Activated CD4-positive, alpha-beta T cell treated with anti-CD3 and anti-CD28 coated beads, Interleukin-2, amount 10 ng/mL, durations not matched to agents 7 days and 5 days (primary cell): ENCODE measurements at regions of chr9 and their contacts with region 1.

Region 1: DNA sequence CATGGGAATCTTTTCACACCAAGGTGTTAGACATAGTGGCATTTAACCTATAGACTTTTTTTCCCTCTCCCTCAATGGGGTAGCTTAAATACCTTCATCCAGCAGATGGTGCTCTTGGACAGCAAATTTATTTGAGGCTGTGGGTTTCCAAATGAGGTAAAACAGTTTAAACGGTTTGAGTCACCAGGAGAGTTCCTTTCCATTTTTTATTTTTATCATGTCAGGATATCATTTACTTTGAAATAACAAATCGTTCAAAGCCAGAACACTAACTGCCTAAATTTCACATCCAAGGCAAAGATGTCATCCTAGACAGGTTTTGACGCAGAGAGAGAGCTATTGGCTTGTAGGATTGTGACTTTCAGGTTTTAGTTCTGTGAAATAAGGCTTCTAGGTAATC is 69.7 kb downstream of the KDM4C start:
- DNase-seq: peak; percentile 59
- H3K4me3 Mint-ChIP-seq: no peak overlapping the region
- H3K27ac Mint-ChIP-seq: no peak overlapping the region
- H3K4me1 Mint-ChIP-seq: peaks cover 2% of the 10 kb centered on the region
- H3K27me3 Mint-ChIP-seq: no peaks in the 10 kb centered on the region

Region 2: GRCh38 chr9:6805532-6805931 is 21.9 kb before region 1 on chr9:
- CTCF ChIA-PET with region 1: no interaction called
- POLR2A ChIA-PET with region 1: no interaction called
- DNase-seq: no peak
- H3K4me3 Mint-ChIP-seq: no peak overlapping the region
- H3K27ac Mint-ChIP-seq: no peak overlapping the region
- H3K4me1 Mint-ChIP-seq: no peaks in the 10 kb centered on the region
- H3K27me3 Mint-ChIP-seq: no peaks in the 10 kb centered on the region

Region 3: GRCh38 chr9:6816581-6816980 is 10.9 kb before region 1 on chr9:
- CTCF ChIA-PET with region 1: interaction called, 13 read pairs
- POLR2A ChIA-PET with region 1: no interaction called
- DNase-seq: no peak
- H3K4me3 Mint-ChIP-seq: no peak overlapping the region
- H3K27ac Mint-ChIP-seq: no peak overlapping the region
- H3K4me1 Mint-ChIP-seq: peaks cover 12% of the 10 kb centered on the region
- H3K27me3 Mint-ChIP-seq: no peaks in the 10 kb centered on the region